T-cell (primary cell): ENCODE measurements at regions of chr16 and their contacts with region 1.

Region 1: DNA sequence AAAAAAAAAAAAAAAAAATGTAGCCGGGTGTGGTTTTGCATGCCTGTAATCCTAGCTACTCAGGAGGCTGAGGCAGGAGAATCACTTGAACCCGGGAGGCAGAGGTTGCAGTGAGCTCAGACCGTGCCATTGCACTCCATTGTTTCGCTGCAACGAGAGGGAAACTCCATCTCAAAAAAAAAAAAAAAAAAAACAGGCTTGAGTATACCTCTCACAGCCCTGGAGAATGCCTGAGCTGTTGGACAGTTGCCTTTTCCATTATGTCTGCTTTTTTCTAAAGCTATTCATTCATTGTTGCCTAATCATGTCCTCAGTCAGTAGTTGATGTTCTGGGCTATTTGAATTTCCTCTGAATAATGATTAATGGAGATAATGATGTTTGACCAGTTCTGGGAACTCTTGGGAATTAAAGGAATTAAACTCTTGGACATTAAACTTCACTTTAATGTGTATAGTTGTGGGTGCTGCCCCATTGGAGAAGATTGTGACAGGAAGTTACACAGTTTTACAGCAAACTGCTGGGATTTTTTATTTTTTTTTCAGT is 11.8 kb downstream of the HMOX2 start:
- DNase-seq: peak in 2 of 35 experiments; percentile 11 to 47
- ATAC-seq: peak; percentile 23 to 60 (median 35)
- H3K4me3 ChIP-seq: no peak overlapping the region
- H3K4me3 Mint-ChIP-seq: peak overlapping the region; percentile 68 to 75 (median 70)
- H3K27ac ChIP-seq: peak overlapping the region; percentile 92
- H3K27ac Mint-ChIP-seq: peak overlapping the region; percentile 94 to 95
- H3K4me1 ChIP-seq: peaks cover 43 to 65% of the 10 kb centered on the region in 2 experiments
- H3K4me1 Mint-ChIP-seq: peaks cover 65 to 71% (median 70%) of the 10 kb centered on the region in 3 donors
- H3K27me3 ChIP-seq: no peaks in the 10 kb centered on the region
- H3K27me3 Mint-ChIP-seq: no peaks in the 10 kb centered on the region

Region 2: DNA sequence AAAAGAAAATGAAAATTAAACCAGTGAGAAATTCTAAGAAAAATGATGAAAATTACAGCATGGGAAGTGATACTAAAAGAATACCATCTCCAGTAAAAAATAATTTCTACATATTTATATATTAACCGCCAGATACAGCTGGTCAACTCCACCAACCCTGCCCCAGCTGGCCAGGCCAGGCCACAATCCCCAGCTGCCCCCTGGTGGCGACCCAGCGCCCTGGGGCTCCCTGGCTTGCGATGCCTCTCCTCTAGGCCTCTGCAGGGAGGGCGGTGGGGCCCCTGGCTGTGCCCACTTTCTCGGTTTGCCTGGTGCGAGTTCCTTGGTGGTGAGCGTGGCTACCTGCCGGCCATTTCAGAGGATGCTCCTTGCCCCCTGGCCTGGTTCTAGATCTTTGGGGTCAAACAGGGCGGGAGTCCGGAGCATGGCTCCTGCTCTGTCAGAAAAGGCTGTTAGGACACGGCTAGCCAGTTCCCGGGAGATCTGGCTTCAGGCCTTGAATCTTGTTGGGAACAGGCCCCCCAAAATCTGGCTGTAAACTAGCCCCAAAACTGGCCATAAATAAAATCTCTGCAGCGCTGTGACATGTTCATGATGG is 157.7 kb before region 1 on chr16:
- CTCF ChIA-PET with region 1: no interaction called
- POLR2A ChIA-PET with region 1: no interaction called
- DNase-seq: peak in 34 of 35 experiments; percentile 26 to 80 (median 58)
- ATAC-seq: peak; percentile 61 to 71 (median 64)
- H3K4me3 ChIP-seq: no peak overlapping the region
- H3K4me3 Mint-ChIP-seq: no peak overlapping the region
- H3K27ac ChIP-seq: no peak overlapping the region
- H3K27ac Mint-ChIP-seq: no peak overlapping the region
- H3K4me1 ChIP-seq: peaks cover 0 to 17% of the 10 kb centered on the region in 2 experiments
- H3K4me1 Mint-ChIP-seq: peaks cover 0 to 8% (median 3%) of the 10 kb centered on the region in 3 donors
- H3K27me3 ChIP-seq: peaks cover 0 to 53% of the 10 kb centered on the region in 2 experiments
- H3K27me3 Mint-ChIP-seq: peaks cover 0 to 10% of the 10 kb centered on the region in 2 donors

Region 3: GRCh38 chr16:4471869-4472268 is 16.2 kb before region 1 on chr16:
- CTCF ChIA-PET with region 1: interaction called in 1 of 2 experiments, 5 read pairs
- POLR2A ChIA-PET with region 1: interaction called, 6 to 13 read pairs
- DNase-seq: no peak
- ATAC-seq: no peak
- H3K4me3 ChIP-seq: no peak overlapping the region
- H3K4me3 Mint-ChIP-seq: no peak overlapping the region
- H3K27ac ChIP-seq: no peak overlapping the region
- H3K27ac Mint-ChIP-seq: peak overlapping the region; percentile 49 to 84
- H3K4me1 ChIP-seq: peaks cover 12 to 45% of the 10 kb centered on the region in 2 experiments
- H3K4me1 Mint-ChIP-seq: peaks cover 17 to 29% (median 28%) of the 10 kb centered on the region in 3 donors
- H3K27me3 ChIP-seq: no peaks in the 10 kb centered on the region
- H3K27me3 Mint-ChIP-seq: no peaks in the 10 kb centered on the region

Region 4: DNA sequence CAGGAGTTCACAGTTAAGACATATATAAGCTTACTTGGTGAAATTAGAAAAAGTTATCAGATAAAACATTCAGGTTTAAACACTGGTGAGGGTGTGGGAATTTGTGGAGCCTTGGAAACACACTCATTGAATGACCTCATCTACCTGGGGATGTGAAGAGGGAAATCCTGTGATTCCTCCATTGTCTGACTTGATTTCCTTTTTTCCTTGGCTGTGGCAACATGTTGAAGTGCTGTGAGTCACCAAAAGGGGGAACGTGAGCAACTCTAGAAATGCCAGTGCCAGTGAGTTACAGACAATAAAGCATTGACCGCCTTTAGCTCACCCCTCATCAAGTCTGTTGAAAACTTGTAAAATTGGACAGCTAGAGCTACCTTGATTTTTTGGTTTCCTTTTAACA is 10.1 kb before region 1 on chr16:
- CTCF ChIA-PET with region 1: interaction called in 1 of 2 experiments, 13 read pairs
- POLR2A ChIA-PET with region 1: interaction called, 6 read pairs
- DNase-seq: peak in 4 of 35 experiments; percentile 6 to 50 (median 14)
- ATAC-seq: no peak
- H3K4me3 ChIP-seq: peak overlapping the region; percentile 32 to 70
- H3K4me3 Mint-ChIP-seq: peak overlapping the region; percentile 88 to 90 (median 90)
- H3K27ac ChIP-seq: peak overlapping the region; percentile 24
- H3K27ac Mint-ChIP-seq: peak overlapping the region; percentile 83 to 84
- H3K4me1 ChIP-seq: peaks cover 37 to 82% of the 10 kb centered on the region in 2 experiments
- H3K4me1 Mint-ChIP-seq: peaks cover 54 to 65% (median 59%) of the 10 kb centered on the region in 3 donors
- H3K27me3 ChIP-seq: no peaks in the 10 kb centered on the region
- H3K27me3 Mint-ChIP-seq: no peaks in the 10 kb centered on the region

Region 5: DNA sequence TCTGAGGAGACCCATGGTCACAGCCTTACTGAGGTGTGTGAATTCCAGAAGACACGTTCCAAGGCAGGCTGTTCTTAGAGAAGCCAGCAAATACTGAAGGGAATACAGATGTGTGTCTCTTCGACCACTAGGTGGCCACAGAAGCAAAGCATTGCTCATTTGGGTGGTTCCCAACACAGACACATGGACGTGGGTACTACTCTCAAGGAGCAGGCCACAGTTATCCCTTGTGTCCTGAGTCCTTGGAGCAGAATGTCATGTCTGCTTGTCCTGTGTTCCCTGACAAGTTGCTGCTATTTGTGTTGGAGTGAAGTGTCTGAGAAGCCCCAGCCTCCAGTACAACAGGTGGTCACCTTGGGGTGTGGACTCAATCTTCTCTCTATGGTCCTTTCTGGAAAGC is 18.4 kb after region 1 on chr16:
- CTCF ChIA-PET with region 1: interaction called, 10 to 12 read pairs
- POLR2A ChIA-PET with region 1: interaction called in 1 of 2 experiments, 5 read pairs
- DNase-seq: peak; percentile 24 to 84 (median 49)
- ATAC-seq: peak; percentile 35 to 50 (median 38)
- H3K4me3 ChIP-seq: no peak overlapping the region
- H3K4me3 Mint-ChIP-seq: peak overlapping the region; percentile 70 to 72 (median 70)
- H3K27ac ChIP-seq: peak overlapping the region; percentile 97
- H3K27ac Mint-ChIP-seq: peak overlapping the region; percentile 95 to 99
- H3K4me1 ChIP-seq: peaks cover 41 to 80% of the 10 kb centered on the region in 2 experiments
- H3K4me1 Mint-ChIP-seq: peaks cover 62 to 75% (median 69%) of the 10 kb centered on the region in 3 donors
- H3K27me3 ChIP-seq: no peaks in the 10 kb centered on the region
- H3K27me3 Mint-ChIP-seq: no peaks in the 10 kb centered on the region

Region 6: DNA sequence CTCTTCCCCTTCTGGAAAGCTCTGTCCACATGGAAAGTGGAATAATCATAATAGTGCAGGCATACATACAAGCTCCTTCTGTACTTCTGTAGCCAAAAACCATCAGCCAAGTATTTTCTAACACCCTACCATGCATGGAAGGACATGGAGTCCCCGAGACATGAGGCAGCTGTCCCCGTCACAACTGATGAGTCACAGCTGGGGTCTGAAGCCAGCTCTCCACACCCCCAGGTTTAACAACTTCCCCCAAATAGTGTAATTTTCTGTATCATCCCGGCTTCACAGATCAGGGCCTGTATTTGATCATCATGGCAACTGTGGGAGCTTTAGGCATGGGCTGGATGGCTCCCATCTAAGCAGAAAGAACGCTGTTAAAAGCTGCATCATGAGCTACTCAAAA is 84.7 kb after region 1 on chr16:
- CTCF ChIA-PET with region 1: no interaction called
- POLR2A ChIA-PET with region 1: interaction called in 1 of 2 experiments, 10 read pairs
- DNase-seq: no peak
- ATAC-seq: no peak
- H3K4me3 ChIP-seq: no peak overlapping the region
- H3K4me3 Mint-ChIP-seq: no peak overlapping the region
- H3K27ac ChIP-seq: no peak overlapping the region
- H3K27ac Mint-ChIP-seq: no peak overlapping the region
- H3K4me1 ChIP-seq: peaks cover 0 to 7% of the 10 kb centered on the region in 2 experiments
- H3K4me1 Mint-ChIP-seq: no peaks in the 10 kb centered on the region
- H3K27me3 ChIP-seq: peaks cover 0 to 15% of the 10 kb centered on the region in 2 experiments
- H3K27me3 Mint-ChIP-seq: no peaks in the 10 kb centered on the region

Region 7: GRCh38 chr16:4616047-4616811 is 128.2 kb after region 1 on chr16:
- CTCF ChIA-PET with region 1: no interaction called
- POLR2A ChIA-PET with region 1: no interaction called
- DNase-seq: peak; percentile 94 to 100 (median 99)
- ATAC-seq: peak; percentile 89 to 93 (median 90)
- H3K4me3 ChIP-seq: peak overlapping the region; percentile 75 to 88
- H3K4me3 Mint-ChIP-seq: peak overlapping the region; percentile 91 to 93 (median 92)
- H3K27ac ChIP-seq: peak overlapping the region; percentile 88
- H3K27ac Mint-ChIP-seq: peak overlapping the region; percentile 99
- H3K4me1 ChIP-seq: peaks cover 13 to 60% of the 10 kb centered on the region in 2 experiments
- H3K4me1 Mint-ChIP-seq: peaks cover 36 to 45% (median 38%) of the 10 kb centered on the region in 3 donors
- H3K27me3 ChIP-seq: no peaks in the 10 kb centered on the region
- H3K27me3 Mint-ChIP-seq: no peaks in the 10 kb centered on the region

Region 8: DNA sequence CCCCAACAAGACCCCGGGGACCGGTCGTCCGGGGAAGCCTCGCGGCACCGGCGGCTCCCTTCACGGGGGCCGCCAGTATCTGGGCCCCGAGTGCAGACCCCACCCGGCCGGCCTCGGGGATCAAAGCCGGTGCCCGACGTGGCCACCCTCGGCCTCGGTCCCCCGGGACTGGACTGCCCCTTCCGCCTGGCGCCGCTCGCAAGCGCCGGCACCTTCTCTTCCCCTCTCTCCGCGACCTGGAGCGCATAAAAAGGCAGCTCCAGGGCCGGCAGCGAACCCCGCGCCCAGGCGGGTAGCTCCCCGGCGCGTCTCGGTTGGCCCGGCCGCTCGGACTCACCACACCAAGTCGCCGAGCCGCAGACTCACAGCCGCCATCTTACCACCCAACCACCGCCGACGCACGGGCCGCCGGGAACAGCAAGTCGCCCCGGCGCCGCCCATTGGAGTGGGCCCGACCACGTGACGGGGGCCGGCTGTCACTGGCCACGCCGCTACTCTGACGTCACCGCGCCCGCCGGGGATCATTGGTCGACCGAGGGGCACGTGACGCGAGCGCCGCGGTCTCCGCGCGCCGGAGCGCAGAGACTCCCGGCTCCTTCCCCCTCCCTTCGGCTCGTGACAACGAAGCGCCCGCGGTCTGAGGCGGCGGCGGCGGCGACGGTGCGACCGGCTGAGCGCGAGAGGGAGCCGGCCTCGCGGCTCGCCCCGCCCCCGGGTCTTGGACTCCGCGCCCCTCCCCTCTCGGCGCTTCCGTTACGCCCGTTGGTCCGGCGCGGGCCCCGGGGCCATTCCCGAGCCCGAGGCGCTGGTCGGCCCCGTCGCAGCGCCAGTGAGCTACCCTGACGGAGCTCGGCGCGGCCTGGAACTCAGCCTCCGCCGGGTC is 359.1 kb after region 1 on chr16 and contains the starts of genes GLYR1 and UBN1:
- CTCF ChIA-PET with region 1: no interaction called
- POLR2A ChIA-PET with region 1: interaction called in 1 of 2 experiments, 13 read pairs
- DNase-seq: peak; percentile 96 to 100 (median 99)
- ATAC-seq: peak; percentile 90 to 93 (median 92)
- H3K4me3 ChIP-seq: peak within 1 kb of the TSS; percentile 88 to 94
- H3K4me3 Mint-ChIP-seq: peak within 1 kb of the TSS; percentile 88 to 91 (median 88)
- H3K27ac ChIP-seq: peak within 1 kb of the TSS; percentile 64
- H3K27ac Mint-ChIP-seq: peak within 1 kb of the TSS; percentile 86 to 88
- H3K4me1 ChIP-seq: peaks cover 26 to 36% of the 10 kb centered on the region in 2 experiments
- H3K4me1 Mint-ChIP-seq: peaks cover 54 to 61% (median 60%) of the 10 kb centered on the region in 3 donors
- H3K27me3 ChIP-seq: no peaks in the 10 kb centered on the region
- H3K27me3 Mint-ChIP-seq: no peaks in the 10 kb centered on the region
- total RNA-seq, gene GLYR1: 95.5 to 106 (median 102) TPM
- total RNA-seq, gene UBN1: 41.8 to 53.7 (median 48.2) TPM